H1 (cell line): ENCODE measurements at regions of chr17 and their contacts with region 1.

Region 1: DNA sequence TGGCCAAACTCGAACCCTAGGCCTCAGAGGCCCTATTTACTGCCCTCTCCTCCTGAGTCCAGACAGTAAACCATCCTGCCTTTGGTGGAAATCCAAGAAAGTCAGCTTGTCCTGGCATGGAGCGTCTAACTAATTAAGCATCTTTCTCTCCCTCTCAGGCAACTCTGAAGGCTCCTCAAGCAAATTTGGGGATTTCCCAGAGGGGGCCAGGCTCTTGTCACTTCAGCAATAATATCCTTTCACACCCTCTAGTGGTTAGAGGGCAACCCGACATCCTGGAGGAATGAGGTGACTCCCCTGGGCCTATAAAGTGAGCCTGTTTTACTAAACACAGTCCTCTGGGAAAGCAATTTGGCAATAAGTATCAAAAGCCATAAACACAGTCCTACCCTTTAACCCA is 60.4 kb downstream of the NOG start:
- DNase-seq: no peak
- H3K4me3 ChIP-seq: no peak overlapping the region
- H3K27ac ChIP-seq: no peak overlapping the region
- H3K4me1 ChIP-seq: 0 out of 7 replicates have a peak, but pooled peaks cover 0 to 2% (median 0%) of the 10 kb centered on the region in 4 experiments
- H3K27me3 ChIP-seq: peaks cover 0 to 2% (median 0%) of the 10 kb centered on the region in 4 experiments; a peak in 1 of 7 replicates
- CTCF ChIP-seq: peak; percentile 33 to 68 (median 65)
- EP300 ChIP-seq: no peak
- POLR2A ChIP-seq: no peak
- RAD21 ChIP-seq: peak; percentile 64 to 74

Region 2: GRCh38 chr17:56431736-56432135 is 222.1 kb before region 1 on chr17:
- CTCF ChIA-PET with region 1: no interaction called
- POLR2A ChIA-PET with region 1: no interaction called
- DNase-seq: no peak
- H3K4me3 ChIP-seq: no peak overlapping the region
- H3K27ac ChIP-seq: no peak overlapping the region
- H3K4me1 ChIP-seq: peaks cover 0 to 7% (median 4%) of the 10 kb centered on the region in 4 experiments; a peak in 5 of 7 replicates
- H3K27me3 ChIP-seq: no peaks in the 10 kb centered on the region
- CTCF ChIP-seq: no peak
- EP300 ChIP-seq: no peak
- POLR2A ChIP-seq: no peak
- RAD21 ChIP-seq: no peak

Region 3: GRCh38 chr17:56598466-56599148 is 55.3 kb before region 1 on chr17:
- CTCF ChIA-PET with region 1: interaction called, 13 read pairs
- POLR2A ChIA-PET with region 1: interaction called, 3 read pairs
- DNase-seq: no peak
- H3K4me3 ChIP-seq: no peak overlapping the region
- H3K27ac ChIP-seq: no peak overlapping the region
- H3K4me1 ChIP-seq: peaks cover 0 to 8% (median 4%) of the 10 kb centered on the region in 4 experiments; a peak in 5 of 7 replicates
- H3K27me3 ChIP-seq: peaks cover 8 to 50% (median 40%) of the 10 kb centered on the region in 4 experiments
- CTCF ChIP-seq: no peak
- EP300 ChIP-seq: no peak
- POLR2A ChIP-seq: no peak
- RAD21 ChIP-seq: no peak

Region 4: GRCh38 chr17:56629531-56630075 is 24.3 kb before region 1 on chr17:
- CTCF ChIA-PET with region 1: interaction called, 13 read pairs
- POLR2A ChIA-PET with region 1: no interaction called
- DNase-seq: peak; percentile 29 to 50
- H3K4me3 ChIP-seq: no peak overlapping the region
- H3K27ac ChIP-seq: no peak overlapping the region
- H3K4me1 ChIP-seq: peaks cover 0 to under 1% (median 0%) of the 10 kb centered on the region in 4 experiments; a peak in 1 of 7 replicates
- H3K27me3 ChIP-seq: no peaks in the 10 kb centered on the region
- CTCF ChIP-seq: peak; percentile 69 to 78 (median 72)
- EP300 ChIP-seq: no peak
- POLR2A ChIP-seq: no peak
- RAD21 ChIP-seq: peak; percentile 33 to 40; a peak in 3 of 4 replicates

Region 5: GRCh38 chr17:56638591-56639051 is 15.3 kb before region 1 on chr17:
- CTCF ChIA-PET with region 1: interaction called, 14 read pairs
- POLR2A ChIA-PET with region 1: interaction called, 3 read pairs
- DNase-seq: no peak
- H3K4me3 ChIP-seq: no peak overlapping the region
- H3K27ac ChIP-seq: no peak overlapping the region
- H3K4me1 ChIP-seq: peaks cover 0 to 2% (median 0%) of the 10 kb centered on the region in 4 experiments; a peak in 1 of 7 replicates
- H3K27me3 ChIP-seq: no peaks in the 10 kb centered on the region; a peak in 1 of 7 replicates
- CTCF ChIP-seq: no peak
- EP300 ChIP-seq: no peak
- POLR2A ChIP-seq: no peak
- RAD21 ChIP-seq: no peak

Region 6: GRCh38 chr17:56752263-56752866 is 98.5 kb after region 1 on chr17:
- CTCF ChIA-PET with region 1: no interaction called
- POLR2A ChIA-PET with region 1: no interaction called
- DNase-seq: no peak
- H3K4me3 ChIP-seq: no peak overlapping the region
- H3K27ac ChIP-seq: no peak overlapping the region
- H3K4me1 ChIP-seq: peaks cover 0 to 3% (median 0%) of the 10 kb centered on the region in 4 experiments; a peak in 4 of 7 replicates
- H3K27me3 ChIP-seq: no peaks in the 10 kb centered on the region
- CTCF ChIP-seq: no peak
- EP300 ChIP-seq: no peak
- POLR2A ChIP-seq: no peak
- RAD21 ChIP-seq: no peak